PC-9 (cell line): ENCODE measurements at regions of chr14 and their contacts with region 1.

Region 1: DNA sequence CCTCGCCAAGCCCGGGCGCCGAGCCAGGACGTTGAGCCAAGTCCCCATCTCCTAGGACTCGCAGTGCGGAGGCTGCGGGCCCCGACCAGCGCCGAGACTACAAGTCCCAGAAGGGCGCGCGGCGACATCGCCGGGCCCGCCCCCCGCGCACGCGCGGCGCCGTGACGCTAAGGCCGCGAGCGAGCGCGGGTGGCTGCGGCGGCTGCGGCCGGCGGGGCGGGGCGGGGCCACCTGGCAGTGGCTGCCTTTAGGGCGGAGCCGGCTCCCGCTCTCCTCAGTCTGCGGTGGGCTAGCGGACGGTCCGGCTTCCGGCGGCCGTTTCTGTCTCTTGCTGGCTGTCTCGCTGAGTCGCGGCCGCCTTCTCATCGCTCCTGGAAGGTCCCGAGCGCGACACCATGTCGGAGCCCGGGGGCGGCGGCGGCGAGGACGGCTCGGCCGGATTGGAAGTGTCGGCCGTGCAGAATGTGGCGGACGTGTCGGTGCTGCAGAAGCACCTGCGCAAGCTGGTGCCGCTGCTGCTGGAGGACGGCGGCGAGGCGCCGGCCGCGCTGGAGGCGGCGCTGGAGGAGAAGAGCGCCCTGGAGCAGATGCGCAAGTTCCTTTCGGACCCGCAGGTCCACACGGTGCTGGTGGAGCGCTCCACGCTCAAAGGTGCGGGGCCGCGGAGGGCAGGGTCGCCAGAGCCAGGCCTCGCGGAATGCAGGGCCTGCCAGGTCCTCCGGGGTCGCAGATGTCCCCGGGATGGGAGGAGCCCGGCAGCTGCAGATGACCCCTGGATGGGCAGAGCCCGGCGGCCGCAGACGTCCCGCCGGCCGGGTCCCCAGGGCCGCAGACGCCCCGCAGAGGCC is at the start of gene DYNC1H1:
- DNase-seq: peak; percentile 83 to 99
- H3K4me3 ChIP-seq: peak within 1 kb of the TSS; percentile 76
- H3K27ac ChIP-seq: peak within 1 kb of the TSS; percentile 75
- H3K4me1 ChIP-seq: peaks cover 59% of the 10 kb centered on the region
- H3K27me3 ChIP-seq: no peaks in the 10 kb centered on the region
- CTCF ChIP-seq: no peak; the same call in 1 of the 2 replicates
- total RNA-seq, gene DYNC1H1: 1,203 and 1,268 TPM in 2 replicates

Region 2: DNA sequence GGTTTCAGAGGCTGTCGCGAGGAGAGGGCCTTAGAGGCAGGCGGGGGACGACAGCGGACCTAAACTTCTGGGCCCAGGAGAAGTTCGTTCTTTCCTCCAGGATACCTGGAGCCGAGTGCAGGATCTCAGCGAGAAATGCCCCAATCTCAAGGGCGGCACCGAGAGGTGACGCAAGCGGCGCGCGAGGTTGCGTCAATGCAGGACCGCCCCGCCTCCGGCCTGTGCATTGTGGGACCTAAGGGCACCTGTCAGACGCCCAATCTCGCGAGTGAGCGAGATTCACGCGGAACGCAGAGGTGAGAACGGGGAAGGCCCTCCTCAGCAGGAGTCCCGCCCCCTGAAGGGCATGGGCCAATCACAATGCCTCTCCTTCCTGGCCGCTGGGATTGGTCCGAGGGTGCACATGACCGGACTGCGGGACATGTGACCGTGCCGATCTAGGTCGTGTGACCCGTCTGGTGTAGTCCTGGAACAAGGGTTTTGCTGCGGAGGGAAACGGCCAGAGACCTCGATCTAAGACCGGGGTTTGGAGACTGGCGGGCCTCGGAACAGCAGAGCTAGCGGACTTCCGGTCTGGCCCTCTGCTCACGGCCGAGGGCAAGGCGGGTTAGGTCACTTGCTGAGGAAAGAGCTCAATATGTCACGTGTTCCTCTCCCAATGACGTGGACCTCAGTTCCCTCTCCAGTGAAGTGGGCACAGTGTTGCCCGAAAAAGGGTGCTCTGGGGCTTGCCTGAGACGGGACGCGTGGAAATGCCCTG is 16.4 kb before region 1 on chr14:
- CTCF ChIA-PET with region 1: no interaction called
- POLR2A ChIA-PET with region 1: no interaction called
- intact Hi-C with region 1: loop called (anchors 1 kb)
- DNase-seq: peak; percentile 100
- H3K4me3 ChIP-seq: peak overlapping the region; percentile 83
- H3K27ac ChIP-seq: peak overlapping the region; percentile 93
- H3K4me1 ChIP-seq: peaks cover 20% of the 10 kb centered on the region
- H3K27me3 ChIP-seq: no peaks in the 10 kb centered on the region
- CTCF ChIP-seq: no peak

Region 3: GRCh38 chr14:102007916-102008418 is 43.4 kb after region 1 on chr14:
- CTCF ChIA-PET with region 1: no interaction called
- POLR2A ChIA-PET with region 1: no interaction called
- intact Hi-C with region 1: no loop called
- DNase-seq: no peak
- H3K4me3 ChIP-seq: no peak overlapping the region
- H3K27ac ChIP-seq: no peak overlapping the region
- H3K4me1 ChIP-seq: no peaks in the 10 kb centered on the region
- H3K27me3 ChIP-seq: no peaks in the 10 kb centered on the region
- CTCF ChIP-seq: no peak

Region 4: DNA sequence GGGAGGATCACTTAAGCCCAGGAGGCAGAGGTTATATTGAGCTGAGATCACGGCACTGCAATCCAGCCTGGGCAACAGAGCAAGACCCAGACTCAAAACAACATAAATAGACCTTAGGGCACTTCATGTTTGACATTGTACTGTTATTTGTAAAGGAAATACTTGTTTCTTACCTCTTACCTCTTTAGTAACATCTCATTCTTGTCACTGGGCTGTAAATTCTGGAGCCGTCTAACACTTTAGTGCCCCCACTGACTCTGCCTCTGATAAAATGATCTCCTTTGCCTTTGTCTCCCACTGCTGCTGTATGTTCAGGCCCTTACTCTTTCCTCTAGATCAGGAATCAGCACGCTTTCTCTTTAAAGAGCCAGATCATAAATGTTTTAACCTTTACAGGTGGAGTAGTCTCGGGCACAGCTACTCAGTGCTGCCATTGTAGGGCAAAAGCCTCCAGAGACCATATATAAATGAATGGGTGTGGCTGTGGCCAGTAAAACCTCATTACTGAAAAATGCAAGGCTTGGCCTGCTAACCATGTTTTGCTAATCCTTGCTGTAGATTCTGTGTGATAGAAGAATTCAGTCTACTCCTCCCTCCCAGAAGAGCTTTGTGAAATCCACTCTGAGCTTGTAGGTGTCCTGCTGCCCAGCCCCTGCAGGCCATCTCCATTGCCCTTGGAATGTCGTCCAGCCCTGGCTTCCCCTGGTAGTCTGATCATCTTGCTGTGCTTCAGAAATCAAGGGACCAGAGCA is 64.1 kb after region 1 on chr14:
- CTCF ChIA-PET with region 1: no interaction called
- POLR2A ChIA-PET with region 1: interaction called, 7 read pairs
- intact Hi-C with region 1: loop called (anchors 5 kb)
- DNase-seq: peak; percentile 91 to 100
- H3K4me3 ChIP-seq: peak overlapping the region; percentile 24; the same call in 1 of the 2 replicates
- H3K27ac ChIP-seq: peak overlapping the region; percentile 92
- H3K4me1 ChIP-seq: peaks cover 46% of the 10 kb centered on the region
- H3K27me3 ChIP-seq: no peaks in the 10 kb centered on the region
- CTCF ChIP-seq: no peak; the same call in 1 of the 2 replicates

Region 5: GRCh38 chr14:102139248-102140026 is 174.9 kb after region 1 on chr14 and contains the start of gene WDR20:
- CTCF ChIA-PET with region 1: no interaction called
- POLR2A ChIA-PET with region 1: no interaction called
- intact Hi-C with region 1: loop called (anchors 1 kb)
- DNase-seq: peak; percentile 98 to 100
- H3K4me3 ChIP-seq: peak within 1 kb of the TSS; percentile 75
- H3K27ac ChIP-seq: peak within 1 kb of the TSS; percentile 44
- H3K4me1 ChIP-seq: peaks cover 31% of the 10 kb centered on the region
- H3K27me3 ChIP-seq: no peaks in the 10 kb centered on the region
- CTCF ChIP-seq: peak; percentile 19; the same call in 1 of the 2 replicates
- total RNA-seq, gene WDR20: 62.2 and 93.5 TPM in 2 replicates

Region 6: GRCh38 chr14:102235275-102235897 is 270.9 kb after region 1 on chr14:
- CTCF ChIA-PET with region 1: no interaction called
- POLR2A ChIA-PET with region 1: no interaction called
- intact Hi-C with region 1: loop called (anchors 2 kb)
- DNase-seq: peak; percentile 76 to 92
- H3K4me3 ChIP-seq: no peak overlapping the region
- H3K27ac ChIP-seq: peak overlapping the region; percentile 7; the same call in 1 of the 2 replicates
- H3K4me1 ChIP-seq: peaks cover 4% of the 10 kb centered on the region
- H3K27me3 ChIP-seq: no peaks in the 10 kb centered on the region
- CTCF ChIP-seq: peak; percentile 99

Region 7: DNA sequence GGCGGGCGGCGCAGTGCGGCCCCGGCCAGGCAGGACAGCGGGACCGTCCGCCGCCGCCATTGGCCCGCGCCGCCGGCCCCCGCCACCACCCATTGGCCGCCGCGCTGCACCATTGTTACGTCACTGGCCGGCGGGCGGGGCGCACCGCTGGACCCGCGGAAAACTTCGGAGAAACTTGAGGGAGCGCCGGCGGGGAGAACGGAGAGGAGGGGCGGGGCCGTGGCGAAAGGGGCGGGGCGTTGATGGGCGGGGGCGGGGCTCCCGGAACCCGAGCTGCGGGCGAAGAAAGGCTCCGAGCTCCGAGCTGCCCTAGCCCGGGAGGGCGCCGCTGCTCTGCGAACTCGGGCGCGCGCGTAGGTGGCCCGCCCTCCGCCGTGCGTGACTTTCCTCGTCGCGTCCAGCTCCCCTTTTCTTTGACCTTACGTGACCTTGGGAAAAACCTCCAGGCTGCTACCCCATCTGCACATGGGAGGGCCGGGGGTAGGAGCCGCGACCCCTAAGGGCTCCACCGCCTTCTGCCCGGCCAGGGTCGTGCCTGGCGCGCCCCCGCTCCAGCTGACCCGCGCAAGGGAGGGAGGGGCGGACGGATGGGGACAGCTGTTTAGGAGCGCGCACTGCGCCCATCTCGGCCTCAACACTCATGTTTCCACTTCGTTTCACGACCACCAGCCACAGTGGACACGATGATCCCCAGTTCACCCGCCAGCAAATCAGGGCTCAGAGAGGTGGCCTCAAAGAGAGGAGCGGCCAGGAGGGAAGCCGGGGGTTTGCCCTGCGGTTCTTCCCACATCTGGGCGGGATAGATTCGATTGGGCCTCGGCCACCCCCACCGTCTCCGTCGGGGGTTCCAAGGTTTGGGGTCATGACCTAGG is 545.5 kb after region 1 on chr14 and contains the start of gene ANKRD9:
- CTCF ChIA-PET with region 1: interaction called, 7 read pairs
- POLR2A ChIA-PET with region 1: no interaction called
- intact Hi-C with region 1: loop called (anchors 10 kb)
- DNase-seq: peak; percentile 91 to 99
- H3K4me3 ChIP-seq: peak within 1 kb of the TSS; percentile 91
- H3K27ac ChIP-seq: peak within 1 kb of the TSS; percentile 24
- H3K4me1 ChIP-seq: peaks cover 31% of the 10 kb centered on the region
- H3K27me3 ChIP-seq: no peaks in the 10 kb centered on the region
- CTCF ChIP-seq: no peak
- total RNA-seq, gene ANKRD9: 44.6 and 68.8 TPM in 2 replicates

Region 8: DNA sequence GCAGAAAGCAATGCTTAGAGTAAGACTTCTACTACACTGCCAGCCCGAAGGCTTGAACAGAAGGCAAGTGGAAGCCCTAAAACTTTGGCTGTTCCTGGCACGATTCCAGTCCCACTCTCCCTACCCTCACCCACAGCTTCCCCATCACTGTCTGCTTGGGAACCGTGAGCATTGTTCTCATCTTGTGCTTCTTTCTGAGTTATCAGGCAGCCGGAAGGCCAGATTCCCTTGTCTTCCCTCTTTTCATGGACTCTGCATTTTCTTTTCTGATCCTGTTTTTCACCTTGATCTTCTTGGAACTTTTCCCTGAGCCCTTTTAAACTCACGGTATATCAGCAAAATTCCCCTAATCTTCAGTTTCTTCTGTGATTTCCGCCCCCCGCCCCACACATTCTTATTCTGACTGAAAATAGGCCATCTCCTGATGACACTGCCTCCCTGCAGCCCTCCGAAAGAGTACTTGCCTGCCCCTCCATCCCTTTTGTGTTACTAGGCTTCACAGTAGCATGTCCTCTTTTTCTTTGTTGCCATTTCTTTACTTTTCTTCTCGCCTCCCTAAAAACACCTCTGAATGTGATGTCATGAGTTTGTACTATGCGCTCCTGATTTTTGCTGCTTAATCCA is 657.9 kb after region 1 on chr14:
- CTCF ChIA-PET with region 1: no interaction called
- POLR2A ChIA-PET with region 1: no interaction called
- intact Hi-C with region 1: no loop called
- DNase-seq: no peak
- H3K4me3 ChIP-seq: no peak overlapping the region
- H3K27ac ChIP-seq: no peak overlapping the region
- H3K4me1 ChIP-seq: no peaks in the 10 kb centered on the region
- H3K27me3 ChIP-seq: no peaks in the 10 kb centered on the region
- CTCF ChIP-seq: no peak